Caco-2 (cell line): ENCODE measurements at regions of chr3 and their contacts with region 1.

Region 1: DNA sequence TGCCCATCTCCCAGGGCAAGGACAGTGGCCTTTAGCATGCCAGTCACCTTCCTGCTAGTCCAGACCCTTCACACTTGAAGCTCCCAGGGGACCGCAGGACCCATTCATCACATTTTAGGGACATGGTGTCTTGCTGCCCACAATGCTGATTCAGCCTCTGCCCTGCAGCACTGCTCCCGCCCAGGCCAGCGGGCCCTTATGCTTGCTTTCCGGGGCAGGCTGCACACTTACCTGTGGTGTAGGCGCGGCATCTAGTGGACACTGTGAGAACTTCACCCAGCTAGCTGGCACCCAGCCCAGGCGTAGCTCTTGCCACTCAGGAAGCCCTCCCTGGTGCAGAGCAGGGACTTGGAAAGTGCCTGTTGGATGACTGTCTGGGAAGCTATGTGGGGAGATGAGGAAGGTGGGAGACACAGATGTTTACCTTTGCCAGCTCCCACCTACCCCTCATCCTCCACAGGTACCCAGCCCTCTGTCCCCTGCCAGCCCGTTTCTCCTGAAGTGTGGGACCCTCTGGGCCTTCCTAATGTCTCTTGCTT is 26.2 kb upstream of the NR2C2 start:
- DNase-seq: peak; percentile 76 to 81
- H3K4me3 ChIP-seq: no peak overlapping the region
- H3K4me3 Mint-ChIP-seq: no peak overlapping the region
- H3K27ac Mint-ChIP-seq: no peak overlapping the region
- H3K4me1 ChIP-seq: no peaks in the 10 kb centered on the region
- H3K4me1 Mint-ChIP-seq: no peaks in the 10 kb centered on the region
- H3K27me3 ChIP-seq: no peaks in the 10 kb centered on the region
- H3K27me3 Mint-ChIP-seq: peaks cover 8% of the 10 kb centered on the region
- CTCF ChIP-seq: peak; percentile 93 to 96

Region 2: GRCh38 chr3:14633819-14634424 is 287.2 kb before region 1 on chr3:
- CTCF ChIA-PET with region 1: no interaction called
- POLR2A ChIA-PET with region 1: no interaction called
- intact Hi-C with region 1: loop called (anchors 5 kb)
- DNase-seq: peak; percentile 56 to 68
- H3K4me3 ChIP-seq: no peak overlapping the region
- H3K4me3 Mint-ChIP-seq: no peak overlapping the region
- H3K27ac Mint-ChIP-seq: no peak overlapping the region
- H3K4me1 ChIP-seq: no peaks in the 10 kb centered on the region
- H3K4me1 Mint-ChIP-seq: no peaks in the 10 kb centered on the region
- H3K27me3 ChIP-seq: no peaks in the 10 kb centered on the region
- H3K27me3 Mint-ChIP-seq: no peaks in the 10 kb centered on the region
- CTCF ChIP-seq: peak; percentile 62 to 77

Region 3: GRCh38 chr3:14678015-14678503 is 243.1 kb before region 1 on chr3:
- CTCF ChIA-PET with region 1: interaction called, 14 read pairs
- POLR2A ChIA-PET with region 1: no interaction called
- intact Hi-C with region 1: loop called (anchors 1 kb)
- DNase-seq: peak; percentile 66 to 70
- H3K4me3 ChIP-seq: no peak overlapping the region
- H3K4me3 Mint-ChIP-seq: no peak overlapping the region
- H3K27ac Mint-ChIP-seq: peak overlapping the region; percentile 75
- H3K4me1 ChIP-seq: peaks cover 22% of the 10 kb centered on the region
- H3K4me1 Mint-ChIP-seq: peaks cover 32% of the 10 kb centered on the region
- H3K27me3 ChIP-seq: no peaks in the 10 kb centered on the region
- H3K27me3 Mint-ChIP-seq: no peaks in the 10 kb centered on the region
- CTCF ChIP-seq: no peak

Region 4: GRCh38 chr3:14791343-14791945 is 129.7 kb before region 1 on chr3:
- CTCF ChIA-PET with region 1: interaction called, 11 read pairs
- POLR2A ChIA-PET with region 1: no interaction called
- intact Hi-C with region 1: loop called (anchors 1 kb)
- DNase-seq: peak; percentile 69 to 80
- H3K4me3 ChIP-seq: no peak overlapping the region
- H3K4me3 Mint-ChIP-seq: no peak overlapping the region
- H3K27ac Mint-ChIP-seq: no peak overlapping the region
- H3K4me1 ChIP-seq: peaks cover 17% of the 10 kb centered on the region; the same call in 1 of the 2 replicates
- H3K4me1 Mint-ChIP-seq: peaks cover 8% of the 10 kb centered on the region
- H3K27me3 ChIP-seq: no peaks in the 10 kb centered on the region
- H3K27me3 Mint-ChIP-seq: peaks cover 2% of the 10 kb centered on the region
- CTCF ChIP-seq: peak; percentile 52 to 88

Region 5: GRCh38 chr3:15015456-15015855 is 94.3 kb after region 1 on chr3:
- CTCF ChIA-PET with region 1: no interaction called
- POLR2A ChIA-PET with region 1: no interaction called
- intact Hi-C with region 1: loop called (anchors 5 kb)
- DNase-seq: no peak
- H3K4me3 ChIP-seq: no peak overlapping the region
- H3K4me3 Mint-ChIP-seq: no peak overlapping the region
- H3K27ac Mint-ChIP-seq: no peak overlapping the region
- H3K4me1 ChIP-seq: peaks cover 11% of the 10 kb centered on the region; the same call in 1 of the 2 replicates
- H3K4me1 Mint-ChIP-seq: no peaks in the 10 kb centered on the region
- H3K27me3 ChIP-seq: no peaks in the 10 kb centered on the region
- H3K27me3 Mint-ChIP-seq: no peaks in the 10 kb centered on the region
- CTCF ChIP-seq: no peak

Region 6: DNA sequence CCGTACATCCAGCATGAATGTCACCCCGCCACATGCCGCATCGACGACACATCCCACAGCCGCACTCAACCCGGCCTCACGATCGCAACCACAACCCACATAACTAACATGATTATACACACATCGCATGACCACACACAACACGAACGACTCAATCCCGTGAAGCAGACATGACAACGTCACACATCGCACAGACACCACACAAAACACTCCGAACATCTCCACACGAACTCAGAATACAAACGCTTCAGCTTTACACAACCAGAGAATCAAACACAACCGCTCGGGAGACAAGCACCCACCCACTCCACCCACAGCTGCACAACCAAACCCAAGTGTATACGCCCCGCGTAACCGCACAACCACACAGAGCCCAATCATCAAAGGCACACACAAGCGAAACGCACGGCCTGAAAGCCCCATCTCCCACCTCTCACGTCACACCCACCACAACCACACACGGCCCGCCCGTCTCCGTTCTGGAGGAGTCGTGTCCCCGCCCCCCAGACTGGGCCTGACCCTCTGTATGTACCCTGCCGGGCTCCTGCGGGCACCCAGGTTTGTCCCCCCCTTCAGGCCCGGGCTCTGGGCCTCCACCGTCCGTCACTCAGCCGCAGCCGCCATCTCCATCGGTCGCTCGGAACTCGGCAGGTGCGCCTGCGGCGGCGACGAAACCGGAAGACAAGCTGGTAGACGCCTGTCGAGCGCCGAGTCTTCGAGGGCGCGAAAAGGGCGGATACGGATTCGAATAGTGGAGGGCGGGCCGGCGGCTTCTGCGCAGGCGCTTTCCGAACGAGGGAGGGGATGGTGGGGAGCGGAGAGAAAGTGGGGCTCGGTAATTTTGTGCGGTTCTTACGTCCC is 177.6 kb after region 1 on chr3 and contains the start of gene RBSN:
- CTCF ChIA-PET with region 1: no interaction called
- POLR2A ChIA-PET with region 1: no interaction called
- intact Hi-C with region 1: loop called (anchors 2 kb)
- DNase-seq: peak; percentile 94
- H3K4me3 ChIP-seq: peak within 1 kb of the TSS; percentile 85
- H3K4me3 Mint-ChIP-seq: peak within 1 kb of the TSS; percentile 100
- H3K27ac Mint-ChIP-seq: peak within 1 kb of the TSS; percentile 98
- H3K4me1 ChIP-seq: peaks cover 7% of the 10 kb centered on the region; the same call in 1 of the 2 replicates
- H3K4me1 Mint-ChIP-seq: peaks cover 16% of the 10 kb centered on the region
- H3K27me3 ChIP-seq: no peaks in the 10 kb centered on the region
- H3K27me3 Mint-ChIP-seq: no peaks in the 10 kb centered on the region
- CTCF ChIP-seq: no peak
- total RNA-seq, gene RBSN: 18.5 and 19.7 TPM in 2 replicates